ENCODE measurements at regions of chr11 and their contacts with region 1.

Region 1: GRCh38 chr11:57741132-57742086 is at the start of gene SELENOH:
- DNase-seq: peak; percentile 95

Region 2: DNA sequence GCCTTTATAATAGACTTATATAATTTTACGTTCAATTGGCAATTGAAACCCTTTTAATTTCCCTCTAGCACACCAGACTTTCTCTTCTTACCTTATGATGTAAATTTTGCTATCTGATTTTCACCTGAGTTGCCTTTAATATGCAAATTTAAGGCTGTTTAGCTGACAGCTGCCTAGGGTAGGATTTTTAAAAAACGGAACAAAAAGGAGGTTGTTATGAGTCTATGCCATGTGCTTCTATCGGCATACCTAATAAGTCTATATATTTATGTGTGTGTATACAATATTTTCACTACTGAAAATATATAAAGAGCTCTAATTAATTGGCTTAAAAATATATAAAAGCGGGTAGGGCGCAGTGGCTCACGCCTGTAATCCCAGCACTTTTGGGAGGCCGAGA is 11.9 kb before region 1 on chr11:
- CTCF ChIA-PET with region 1: no interaction called
- POLR2A ChIA-PET with region 1: interaction called, 13 read pairs
- DNase-seq: no peak

Region 3: GRCh38 chr11:57751676-57752253 is 10.4 kb after region 1 on chr11 and contains the start of gene BTBD18:
- CTCF ChIA-PET with region 1: interaction called, 6 read pairs
- POLR2A ChIA-PET with region 1: interaction called, 12 read pairs
- DNase-seq: peak; percentile 46

Region 4: GRCh38 chr11:57761301-57762234 is 20.2 kb after region 1 on chr11 and contains the start of gene CTNND1:
- CTCF ChIA-PET with region 1: no interaction called
- POLR2A ChIA-PET with region 1: interaction called, 20 read pairs
- DNase-seq: peak; percentile 91

Region 5: GRCh38 chr11:57800444-57801182 is 59.2 kb after region 1 on chr11:
- CTCF ChIA-PET with region 1: interaction called, 4 read pairs
- POLR2A ChIA-PET with region 1: interaction called, 12 read pairs
- DNase-seq: peak; percentile 65